Activated naive CD4-positive, alpha-beta T cell treated with anti-CD3 and anti-CD28 coated beads for 36 hours (primary cell): ENCODE measurements at regions of chrX and their contacts with region 1.

Region 1: GRCh38 chrX:79270401-79270800 is 96.7 kb downstream of the ITM2A start:
- DNase-seq: peak; percentile 88
- H3K4me3 Mint-ChIP-seq: peak overlapping the region; percentile 52
- H3K27ac Mint-ChIP-seq: peak overlapping the region; percentile 89
- H3K4me1 Mint-ChIP-seq: peaks cover 42% of the 10 kb centered on the region
- H3K27me3 Mint-ChIP-seq: no peaks in the 10 kb centered on the region

Region 2: GRCh38 chrX:78555401-78555980 is 714.9 kb before region 1 on chrX:
- CTCF ChIA-PET with region 1: no interaction called
- intact Hi-C with region 1: loop called (anchors 1 kb)
- DNase-seq: no peak
- H3K4me3 Mint-ChIP-seq: no peak overlapping the region
- H3K27ac Mint-ChIP-seq: no peak overlapping the region
- H3K4me1 Mint-ChIP-seq: peaks cover 2% of the 10 kb centered on the region
- H3K27me3 Mint-ChIP-seq: no peaks in the 10 kb centered on the region

Region 3: GRCh38 chrX:78886550-78886949 is 383.9 kb before region 1 on chrX:
- CTCF ChIA-PET with region 1: interaction called, 3 read pairs
- intact Hi-C with region 1: loop called (anchors 1 kb)
- DNase-seq: no peak
- H3K4me3 Mint-ChIP-seq: no peak overlapping the region
- H3K27ac Mint-ChIP-seq: no peak overlapping the region
- H3K4me1 Mint-ChIP-seq: peaks cover 9% of the 10 kb centered on the region
- H3K27me3 Mint-ChIP-seq: no peaks in the 10 kb centered on the region

Region 4: GRCh38 chrX:79167462-79167861 is 102.9 kb before region 1 on chrX:
- CTCF ChIA-PET with region 1: interaction called, 10 read pairs
- intact Hi-C with region 1: no loop called
- DNase-seq: no peak
- H3K4me3 Mint-ChIP-seq: peak overlapping the region; percentile 63
- H3K27ac Mint-ChIP-seq: peak overlapping the region; percentile 92
- H3K4me1 Mint-ChIP-seq: peaks cover 74% of the 10 kb centered on the region
- H3K27me3 Mint-ChIP-seq: no peaks in the 10 kb centered on the region

Region 5: DNA sequence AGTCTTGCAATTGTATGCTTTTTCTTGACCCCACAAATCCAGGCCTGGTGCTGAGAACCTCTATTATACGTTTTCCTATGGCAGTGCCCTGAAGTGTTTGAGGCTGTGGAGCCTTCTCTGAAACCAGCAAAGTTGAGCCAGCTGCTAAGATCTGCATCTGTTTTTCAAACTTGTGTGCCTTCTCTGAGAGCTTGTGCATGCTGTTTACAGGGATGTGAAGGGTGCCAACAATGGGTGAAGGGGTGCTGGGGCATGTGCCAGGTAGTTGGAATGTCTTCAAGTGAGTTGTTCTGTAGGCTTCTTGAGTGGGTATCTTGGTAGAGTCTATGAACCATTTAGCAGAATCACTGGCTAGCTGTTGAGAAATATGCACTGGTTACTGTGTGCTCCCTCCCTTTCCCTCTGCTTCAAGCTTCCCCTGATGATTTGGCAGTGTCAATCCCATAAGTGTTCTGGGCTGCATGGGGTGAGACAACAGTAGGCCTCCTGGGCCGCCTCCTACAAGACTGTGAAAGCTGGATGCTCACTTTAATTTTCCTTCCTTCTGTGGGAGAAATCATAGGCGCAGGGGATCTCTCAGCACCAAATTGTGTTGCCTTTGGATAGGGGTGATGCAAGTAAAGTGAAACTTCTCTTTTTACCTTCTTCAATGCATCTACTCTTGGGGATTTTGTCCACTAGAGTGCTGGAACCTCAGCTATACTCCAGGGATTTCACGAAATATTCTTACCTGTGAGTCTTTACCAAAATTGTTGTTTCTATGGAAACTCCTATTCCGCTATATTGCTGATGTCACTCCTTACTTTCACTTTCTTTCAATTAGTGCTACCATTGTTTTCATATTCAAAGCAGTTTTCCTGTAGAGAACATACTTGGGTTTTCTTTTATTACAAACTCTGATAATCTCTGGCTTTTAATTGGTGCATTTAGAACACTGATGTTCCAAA is 66.7 kb after region 1 on chrX:
- CTCF ChIA-PET with region 1: no interaction called
- intact Hi-C with region 1: loop called (anchors 5 kb)
- DNase-seq: no peak
- H3K4me3 Mint-ChIP-seq: peak overlapping the region; percentile 65
- H3K27ac Mint-ChIP-seq: peak overlapping the region; percentile 74
- H3K4me1 Mint-ChIP-seq: peaks cover 29% of the 10 kb centered on the region
- H3K27me3 Mint-ChIP-seq: no peaks in the 10 kb centered on the region